Transverse colon (tissue), 4 donors: ENCODE measurements at regions of chr1 and their contacts with region 1.

Region 1: DNA sequence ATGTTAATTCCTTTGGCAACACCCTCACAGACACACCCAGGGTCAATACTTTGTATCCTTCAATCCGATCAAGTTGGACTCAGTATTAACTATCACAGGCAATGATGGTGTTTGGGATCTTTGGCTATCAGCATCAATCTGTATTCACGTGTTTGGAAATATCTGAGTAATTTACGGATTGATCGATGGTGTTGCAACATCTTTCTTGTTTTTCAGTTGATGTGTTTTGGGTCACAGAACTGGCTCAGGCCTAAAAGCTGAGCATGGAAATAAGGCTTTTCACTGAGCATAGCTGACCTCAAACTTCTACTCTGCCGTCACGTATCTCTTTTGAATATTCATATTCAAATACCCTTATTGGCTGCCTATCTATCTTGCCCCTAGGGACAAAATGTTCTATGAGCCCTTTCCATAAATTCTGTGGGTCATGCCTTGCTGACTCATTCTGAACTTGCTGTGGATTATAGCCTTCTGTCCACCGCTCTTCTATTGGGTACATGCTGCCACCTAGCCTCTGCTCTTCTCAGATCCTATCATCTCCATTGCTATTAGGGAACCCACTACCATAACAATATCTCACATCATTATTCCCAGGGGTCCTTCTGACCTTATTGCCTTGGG is 156.0 kb downstream of the PDE4B start:
- DNase-seq: peak; percentile 14
- H3K4me3 ChIP-seq: no peak overlapping the region
- H3K27ac ChIP-seq: peak overlapping the region; percentile 27 to 65 (median 58)
- H3K4me1 ChIP-seq: peaks cover 0 to 14% (median 6%) of the 10 kb centered on the region in 4 donors
- H3K27me3 ChIP-seq: no peaks in the 10 kb centered on the region
- CTCF ChIP-seq: peak in 1 of 5 experiments; percentile 24
- EP300 ChIP-seq: no peak
- POLR2A ChIP-seq: no peak

Region 2: DNA sequence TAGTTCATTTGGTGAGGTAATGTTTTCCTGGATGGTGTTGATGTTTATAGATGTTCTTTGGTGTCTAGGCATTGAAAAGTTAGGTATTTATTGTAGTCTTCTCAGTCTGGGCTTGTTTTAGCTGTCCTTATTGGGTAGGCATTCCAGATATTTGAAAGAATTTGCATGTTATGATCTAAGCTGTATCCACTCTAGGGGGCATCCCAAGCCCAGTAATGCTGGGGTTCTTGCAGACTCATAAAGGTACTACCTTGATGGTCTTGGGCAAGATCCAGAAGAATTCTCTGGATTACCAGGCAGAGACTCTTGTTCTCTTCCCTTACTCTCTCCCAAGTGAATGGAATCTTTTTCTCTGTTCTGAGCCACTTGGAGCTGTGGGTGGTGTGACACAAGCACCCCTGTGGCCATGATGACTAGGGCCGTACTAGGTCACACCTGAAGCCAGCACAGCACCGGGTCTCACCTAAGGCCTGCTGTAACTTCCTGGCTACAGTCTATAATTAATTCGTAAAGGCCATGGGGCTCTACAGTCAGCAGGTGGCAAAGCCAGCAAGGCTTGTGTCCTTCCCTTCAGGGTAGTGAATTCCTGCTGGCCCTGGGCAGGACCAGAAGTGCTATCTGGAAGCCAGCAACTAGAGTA is 230.8 kb before region 1 on chr1:
- in situ Hi-C with region 1: loop called in 1 of 4 experiments (anchors 25 kb)
- intact Hi-C with region 1: no loop called
- DNase-seq: no peak
- H3K4me3 ChIP-seq: no peak overlapping the region
- H3K27ac ChIP-seq: no peak overlapping the region
- H3K4me1 ChIP-seq: no peaks in the 10 kb centered on the region
- H3K27me3 ChIP-seq: no peaks in the 10 kb centered on the region
- CTCF ChIP-seq: peak in 1 of 5 experiments; percentile 9
- EP300 ChIP-seq: no peak
- POLR2A ChIP-seq: no peak

Region 3: DNA sequence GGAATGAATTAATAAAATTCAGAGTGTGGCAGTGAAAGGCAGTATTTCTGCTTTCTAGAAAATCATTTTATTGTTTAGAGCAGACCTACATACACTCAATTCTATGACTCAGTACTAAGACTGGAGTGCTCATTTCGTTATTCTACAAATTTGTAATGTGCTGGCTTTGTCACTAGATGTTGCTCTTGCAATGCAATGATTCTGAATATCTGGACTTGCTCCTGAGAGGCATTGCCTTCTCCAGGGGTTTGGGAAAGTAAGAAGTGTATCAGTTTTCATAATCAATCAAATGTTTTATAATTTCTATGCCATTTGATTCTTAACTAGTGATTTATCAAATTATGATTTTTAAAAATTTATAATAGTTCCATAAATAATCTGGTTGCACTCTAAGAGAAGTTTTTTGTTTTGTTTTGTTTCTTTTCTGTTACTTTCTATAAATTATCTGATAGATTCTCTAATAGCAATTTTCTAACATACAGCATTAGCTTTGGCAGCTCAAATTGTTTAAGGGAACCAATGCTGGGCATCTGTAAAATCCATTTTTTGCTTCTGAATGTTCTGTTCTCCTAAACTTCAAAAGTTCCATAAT is 304.7 kb after region 1 on chr1:
- in situ Hi-C with region 1: no loop called
- intact Hi-C with region 1: no loop called
- DNase-seq: no peak
- H3K4me3 ChIP-seq: no peak overlapping the region
- H3K27ac ChIP-seq: no peak overlapping the region
- H3K4me1 ChIP-seq: peaks cover 0 to 11% (median 0%) of the 10 kb centered on the region in 4 donors
- H3K27me3 ChIP-seq: no peaks in the 10 kb centered on the region
- CTCF ChIP-seq: peak; percentile 68 to 80 (median 72)
- EP300 ChIP-seq: no peak
- POLR2A ChIP-seq: no peak

Region 4: GRCh38 chr1:66464802-66465201 is 516.1 kb after region 1 on chr1:
- in situ Hi-C with region 1: loop called in 2 of 4 experiments (anchors 25 kb)
- intact Hi-C with region 1: no loop called
- DNase-seq: no peak
- H3K4me3 ChIP-seq: no peak overlapping the region
- H3K27ac ChIP-seq: no peak overlapping the region
- H3K4me1 ChIP-seq: no peaks in the 10 kb centered on the region
- H3K27me3 ChIP-seq: no peaks in the 10 kb centered on the region
- CTCF ChIP-seq: no peak
- EP300 ChIP-seq: no peak
- POLR2A ChIP-seq: no peak